ENCODE measurements at regions of chr4 and their contacts with region 1.

Region 1: GRCh38 chr4:109433205-109434006 is at the start of gene SEC24B:
- DNase-seq: peak; percentile 90
- H3K4me3 ChIP-seq: peak within 1 kb of the TSS; percentile 79 to 87
- H3K27ac ChIP-seq: peak within 1 kb of the TSS; percentile 93 to 96
- H3K4me1 ChIP-seq: peaks cover 10% of the 10 kb centered on the region
- H3K27me3 ChIP-seq: no peaks in the 10 kb centered on the region
- CTCF ChIP-seq: peak; percentile 77 to 97 (median 94)
- POLR2A ChIP-seq: peak; percentile 84
- total RNA-seq, gene SEC24B: 27.6 to 44.1 TPM

Region 2: DNA sequence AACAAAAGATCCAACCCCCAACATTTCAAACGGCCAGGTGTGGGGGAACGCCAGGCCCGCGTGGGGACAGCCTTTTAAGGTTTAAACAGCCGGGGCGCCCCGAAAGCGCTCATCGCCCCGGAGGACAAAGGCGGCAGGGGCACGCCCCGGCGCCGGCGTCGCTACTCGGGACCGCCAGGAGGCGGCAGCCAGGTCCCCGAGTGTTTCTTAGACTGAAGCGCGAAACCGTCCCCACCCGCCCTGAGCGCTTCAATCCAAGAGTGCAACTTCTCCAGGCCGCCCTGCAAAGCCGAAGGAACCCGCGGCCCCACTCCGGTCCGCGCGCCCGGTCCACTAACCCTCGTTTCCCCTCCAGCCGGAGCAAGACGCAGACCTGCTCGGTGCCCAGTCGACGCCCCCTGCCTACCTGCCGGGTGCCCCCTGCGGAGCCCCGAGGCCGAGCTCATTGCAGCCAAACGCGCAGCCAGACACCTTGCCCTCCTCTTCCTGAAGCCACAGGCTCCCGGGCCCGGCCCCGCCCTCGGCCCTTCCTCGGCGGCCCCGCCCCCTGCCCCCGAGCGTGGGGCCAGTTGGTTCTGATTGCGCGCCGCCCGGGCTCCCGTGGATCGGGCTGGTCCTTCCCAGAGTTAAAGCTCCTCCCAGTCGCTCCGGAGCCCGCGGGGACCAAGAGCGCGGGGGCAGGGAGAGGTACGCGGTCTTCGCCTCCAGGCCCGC is 269.7 kb after region 1 on chr4 and contains the start of gene CASP6:
- intact Hi-C with region 1: loop called (anchors 5 kb)
- DNase-seq: peak; percentile 84
- H3K4me3 ChIP-seq: peak within 1 kb of the TSS; percentile 59 to 61
- H3K27ac ChIP-seq: peak within 1 kb of the TSS; percentile 81 to 88
- H3K4me1 ChIP-seq: no peaks in the 10 kb centered on the region
- H3K27me3 ChIP-seq: no peaks in the 10 kb centered on the region
- CTCF ChIP-seq: peak; percentile 28 to 75 (median 54)
- POLR2A ChIP-seq: peak; percentile 63
- total RNA-seq, gene CASP6: 17.6 to 37.0 TPM